AG04450 (cell line): ENCODE measurements at regions of chr9 and their contacts with region 1.

Region 1: GRCh38 chr9:113484258-113484730 is 20.8 kb downstream of the RGS3 start:
- DNase-seq: no peak
- H3K4me3 ChIP-seq: no peak overlapping the region
- H3K27ac ChIP-seq: peak overlapping the region; percentile 61
- H3K27me3 ChIP-seq: no peaks in the 10 kb centered on the region
- CTCF ChIP-seq: no peak

Region 2: DNA sequence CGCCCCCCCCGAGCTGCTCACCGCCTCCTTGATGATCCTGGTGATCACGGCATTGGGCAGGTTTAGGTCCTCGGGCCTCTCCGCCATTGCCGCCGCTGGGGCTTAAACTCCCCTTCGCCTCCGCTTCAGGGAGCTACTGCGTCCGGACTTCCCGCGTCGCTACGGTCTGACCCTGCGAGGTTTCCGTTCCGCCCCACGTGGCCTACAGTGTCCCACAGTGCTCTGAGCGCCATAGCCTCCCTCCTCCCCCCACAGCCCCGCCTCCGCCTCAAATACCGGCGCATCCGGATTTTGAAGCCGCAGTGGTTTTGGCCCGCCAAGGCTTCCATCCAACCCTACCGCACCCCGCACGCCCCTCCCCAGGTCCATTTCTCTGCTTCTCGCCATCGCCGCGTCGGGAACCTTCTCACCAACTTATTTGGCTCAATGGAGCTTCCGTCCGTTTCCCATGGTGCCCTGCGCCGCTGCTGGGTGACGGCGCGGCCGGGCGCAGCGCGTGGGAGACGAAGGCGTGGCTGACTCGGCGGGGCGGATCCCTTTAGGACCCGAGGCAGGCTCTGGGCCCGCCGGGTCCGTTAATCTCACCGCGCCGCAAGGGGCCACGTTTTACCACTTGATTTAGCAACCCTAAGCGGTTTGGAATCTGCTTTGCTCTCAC is 74.0 kb before region 1 on chr9 and contains the starts of genes C9orf43 and POLE3:
- CTCF ChIA-PET with region 1: no interaction called
- POLR2A ChIA-PET with region 1: interaction called, 14 read pairs
- DNase-seq: peak; percentile 86
- H3K4me3 ChIP-seq: peak within 1 kb of the TSS; percentile 97
- H3K27ac ChIP-seq: peak within 1 kb of the TSS; percentile 98
- H3K27me3 ChIP-seq: no peaks in the 10 kb centered on the region
- CTCF ChIP-seq: no peak
- polyA plus RNA-seq, gene C9orf43: 0.50 and 0.56 TPM in 2 replicates
- polyA plus RNA-seq, gene POLE3: 36.4 and 45.3 TPM in 2 replicates

Region 3: GRCh38 chr9:113454914-113455761 is 29.2 kb before region 1 on chr9:
- CTCF ChIA-PET with region 1: no interaction called
- POLR2A ChIA-PET with region 1: interaction called, 16 read pairs
- DNase-seq: peak; percentile 79
- H3K4me3 ChIP-seq: no peak overlapping the region
- H3K27ac ChIP-seq: peak overlapping the region; percentile 96
- H3K27me3 ChIP-seq: no peaks in the 10 kb centered on the region
- CTCF ChIP-seq: no peak